ENCODE measurements at regions of chr4 and their contacts with region 1.

Region 1: GRCh38 chr4:131509521-131509920 is 1639.6 kb upstream of the PCDH10 start:
- DNase-seq: no peak
- H3K4me3 ChIP-seq: no peak overlapping the region
- H3K27ac ChIP-seq: no peak overlapping the region
- H3K4me1 ChIP-seq: no peaks in the 10 kb centered on the region
- H3K27me3 ChIP-seq: no peaks in the 10 kb centered on the region
- CTCF ChIP-seq: no peak
- POLR2A ChIP-seq: no peak

Region 2: GRCh38 chr4:131584587-131584986 is 75.1 kb after region 1 on chr4:
- intact Hi-C with region 1: loop called (anchors 10 kb)
- DNase-seq: no peak
- H3K4me3 ChIP-seq: no peak overlapping the region
- H3K27ac ChIP-seq: no peak overlapping the region
- H3K4me1 ChIP-seq: no peaks in the 10 kb centered on the region
- H3K27me3 ChIP-seq: no peaks in the 10 kb centered on the region
- CTCF ChIP-seq: no peak
- POLR2A ChIP-seq: no peak

Region 3: GRCh38 chr4:132063829-132064228 is 554.3 kb after region 1 on chr4:
- intact Hi-C with region 1: no loop called
- DNase-seq: no peak
- H3K4me3 ChIP-seq: no peak overlapping the region
- H3K27ac ChIP-seq: no peak overlapping the region
- H3K4me1 ChIP-seq: no peaks in the 10 kb centered on the region
- H3K27me3 ChIP-seq: no peaks in the 10 kb centered on the region
- CTCF ChIP-seq: no peak
- POLR2A ChIP-seq: no peak

Measured in testis (tissue), 5 donors.